ENCODE measurements at regions of chr5 and their contacts with region 1.

Region 1: GRCh38 chr5:36875790-36876388 is 680 bp upstream of the NIPBL start:
- DNase-seq: peak; percentile 75
- ATAC-seq: peak; percentile 69
- H3K4me3 Mint-ChIP-seq: peak overlapping the region; percentile 93
- H3K27ac Mint-ChIP-seq: peak overlapping the region; percentile 93
- H3K4me1 Mint-ChIP-seq: peaks cover 46% of the 10 kb centered on the region
- H3K27me3 Mint-ChIP-seq: no peaks in the 10 kb centered on the region
- CTCF ChIP-seq: no peak

Region 2: DNA sequence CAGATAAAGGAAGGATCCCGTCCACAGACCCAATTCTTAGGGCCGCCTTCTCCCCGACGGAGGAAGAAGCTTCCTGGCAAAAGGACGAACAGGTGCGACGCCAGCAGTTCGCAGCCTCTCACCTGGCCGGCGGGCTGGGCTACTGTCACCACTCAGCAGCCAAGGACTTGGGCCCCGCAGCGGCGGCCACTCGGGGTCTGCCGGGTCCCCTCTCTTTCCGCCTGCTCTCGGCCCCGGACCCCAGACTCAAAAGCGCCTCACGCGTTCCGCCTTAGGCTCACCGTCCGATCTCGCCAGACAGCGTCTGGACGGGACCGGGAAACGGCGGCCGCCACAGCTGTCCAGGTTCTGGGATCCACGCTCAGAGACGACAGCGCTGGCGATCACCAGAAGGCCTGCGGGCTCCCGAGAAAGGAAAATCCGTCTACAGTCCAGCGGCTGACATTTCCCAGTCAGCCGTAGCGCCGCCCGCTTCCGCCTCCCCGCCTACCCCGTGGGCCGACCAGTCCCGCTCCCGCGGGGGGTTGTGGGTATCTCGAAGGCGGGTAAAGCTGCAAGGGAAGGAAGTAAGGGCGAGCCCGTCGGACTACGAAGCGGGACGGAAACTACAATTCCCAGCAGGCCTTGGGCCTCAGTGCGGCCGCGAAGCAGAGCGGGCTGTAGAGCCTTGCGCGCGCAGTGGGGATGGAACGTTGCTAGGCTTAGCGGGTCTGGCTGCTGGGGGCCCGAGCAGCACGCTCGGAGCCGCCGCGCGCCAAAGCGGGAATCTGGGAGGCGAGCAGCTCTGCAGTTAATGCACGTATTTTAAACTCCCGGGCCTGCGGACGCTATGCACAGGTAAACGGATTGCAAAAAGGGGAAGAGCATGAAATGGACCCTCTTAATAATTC is 724.2 kb before region 1 on chr5 and contains the starts of genes LMBRD2 and SKP2:
- CTCF ChIA-PET with region 1: no interaction called
- POLR2A ChIA-PET with region 1: no interaction called
- intact Hi-C with region 1: loop called (anchors 2 kb)
- DNase-seq: peak; percentile 95
- ATAC-seq: peak; percentile 97
- H3K4me3 Mint-ChIP-seq: peak within 1 kb of the TSS; percentile 96
- H3K27ac Mint-ChIP-seq: peak within 1 kb of the TSS; percentile 85
- H3K4me1 Mint-ChIP-seq: peaks cover 40% of the 10 kb centered on the region
- H3K27me3 Mint-ChIP-seq: no peaks in the 10 kb centered on the region
- CTCF ChIP-seq: no peak
- total RNA-seq, gene LMBRD2: 6.4 and 8.9 TPM in 2 replicates
- total RNA-seq, gene SKP2: 18.5 TPM in 2 replicates

Region 3: GRCh38 chr5:36744773-36745589 is 130.9 kb before region 1 on chr5:
- CTCF ChIA-PET with region 1: interaction called, 7 read pairs
- POLR2A ChIA-PET with region 1: no interaction called
- intact Hi-C with region 1: loop called (anchors 1 kb)
- DNase-seq: peak; percentile 48
- ATAC-seq: peak; percentile 74
- H3K4me3 Mint-ChIP-seq: peak overlapping the region; percentile 89
- H3K27ac Mint-ChIP-seq: peak overlapping the region; percentile 22
- H3K4me1 Mint-ChIP-seq: peaks cover 21% of the 10 kb centered on the region
- H3K27me3 Mint-ChIP-seq: peaks cover 10% of the 10 kb centered on the region
- CTCF ChIP-seq: no peak

Region 4: DNA sequence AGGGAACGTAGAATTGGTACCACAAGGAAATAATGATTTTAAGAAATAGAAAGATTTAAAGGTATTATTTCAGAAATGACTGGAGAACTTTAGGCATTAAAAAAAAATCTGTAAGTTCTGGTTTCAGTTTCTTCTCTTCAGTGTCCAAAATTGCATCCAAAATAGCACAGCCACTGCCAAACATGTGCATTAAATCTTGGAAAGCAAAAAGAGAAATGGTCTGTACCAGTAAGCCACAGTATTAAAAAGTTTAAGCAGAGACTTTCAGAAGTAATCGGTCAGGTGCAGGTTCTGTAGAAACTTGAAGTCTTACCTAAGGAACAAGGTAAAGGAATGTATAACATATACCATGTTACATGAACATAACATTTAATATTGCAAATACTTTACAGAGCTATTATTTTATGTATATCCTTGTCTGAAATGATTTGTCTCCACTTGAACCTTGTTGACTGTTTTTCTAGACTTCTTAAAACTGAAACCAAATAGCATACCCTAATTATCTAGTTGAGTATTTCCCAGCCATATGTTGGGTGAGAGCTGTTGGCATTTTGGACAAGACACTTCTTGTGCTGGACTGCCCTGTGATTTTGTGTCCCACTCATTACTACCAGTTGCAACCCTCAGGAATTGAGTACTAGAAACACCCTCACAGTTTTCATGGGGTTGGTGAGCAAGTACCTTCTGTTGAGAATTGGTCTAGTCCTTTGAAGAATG is 32.8 kb after region 1 on chr5:
- CTCF ChIA-PET with region 1: no interaction called
- POLR2A ChIA-PET with region 1: interaction called, 3 read pairs
- intact Hi-C with region 1: loop called (anchors 5 kb)
- DNase-seq: no peak
- ATAC-seq: no peak
- H3K4me3 Mint-ChIP-seq: no peak overlapping the region
- H3K27ac Mint-ChIP-seq: no peak overlapping the region
- H3K4me1 Mint-ChIP-seq: peaks cover 52% of the 10 kb centered on the region
- H3K27me3 Mint-ChIP-seq: no peaks in the 10 kb centered on the region
- CTCF ChIP-seq: no peak

Region 5: GRCh38 chr5:36982146-36982545 is 106.3 kb after region 1 on chr5:
- CTCF ChIA-PET with region 1: no interaction called
- POLR2A ChIA-PET with region 1: no interaction called
- intact Hi-C with region 1: no loop called
- DNase-seq: no peak
- ATAC-seq: no peak
- H3K4me3 Mint-ChIP-seq: no peak overlapping the region
- H3K27ac Mint-ChIP-seq: no peak overlapping the region
- H3K4me1 Mint-ChIP-seq: peaks cover 12% of the 10 kb centered on the region
- H3K27me3 Mint-ChIP-seq: no peaks in the 10 kb centered on the region
- CTCF ChIP-seq: no peak

Region 6: GRCh38 chr5:37005946-37006540 is 130.2 kb after region 1 on chr5:
- CTCF ChIA-PET with region 1: no interaction called
- POLR2A ChIA-PET with region 1: interaction called, 3 read pairs
- intact Hi-C with region 1: loop called (anchors 2 kb)
- DNase-seq: no peak
- ATAC-seq: no peak
- H3K4me3 Mint-ChIP-seq: no peak overlapping the region
- H3K27ac Mint-ChIP-seq: no peak overlapping the region
- H3K4me1 Mint-ChIP-seq: no peaks in the 10 kb centered on the region
- H3K27me3 Mint-ChIP-seq: no peaks in the 10 kb centered on the region
- CTCF ChIP-seq: no peak

Region 7: DNA sequence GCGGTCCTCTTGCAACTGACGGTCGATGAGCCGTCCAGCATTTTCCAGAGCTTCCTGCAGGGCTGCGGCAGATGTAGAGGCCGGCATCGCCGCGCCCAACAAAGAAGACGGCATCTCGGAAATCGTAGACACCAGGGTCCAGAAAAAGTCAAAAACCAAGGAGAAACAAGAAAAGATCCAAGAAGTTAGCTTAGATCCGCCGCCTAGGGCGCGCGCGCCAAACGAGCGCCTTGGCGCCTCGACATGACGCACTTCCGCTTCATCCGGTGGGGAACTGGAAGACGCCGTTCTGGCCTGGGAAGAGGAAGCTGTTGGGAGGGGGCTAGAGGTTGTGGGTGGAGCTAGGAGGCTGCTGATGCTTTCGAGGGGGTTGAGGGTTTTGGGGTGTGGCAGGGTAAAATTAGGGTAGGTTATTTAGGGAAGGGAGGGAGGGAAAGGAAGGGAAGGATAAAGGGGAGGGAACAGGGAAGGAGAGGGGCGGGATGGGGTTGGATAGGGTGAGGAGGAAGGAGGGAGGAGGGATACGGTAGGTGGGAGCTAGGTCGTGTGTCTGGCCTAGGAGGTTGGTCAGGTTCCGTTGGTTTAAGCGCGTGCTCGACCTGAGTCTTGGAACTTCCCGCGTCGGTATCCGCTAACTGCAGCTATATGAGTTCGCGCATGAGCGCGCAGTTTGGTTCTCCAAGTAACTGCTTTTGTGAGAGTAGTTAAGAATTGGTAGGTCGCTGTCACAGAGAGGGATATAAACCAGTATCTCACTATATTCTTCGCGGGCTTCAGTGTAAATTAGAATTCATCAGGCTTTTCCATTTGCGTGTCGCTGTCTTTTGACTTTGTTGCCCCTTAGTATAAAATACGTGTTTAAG is 495.2 kb after region 1 on chr5 and contains the start of gene NUP155:
- CTCF ChIA-PET with region 1: no interaction called
- POLR2A ChIA-PET with region 1: interaction called, 7 read pairs
- intact Hi-C with region 1: loop called (anchors 5 kb)
- DNase-seq: peak; percentile 79
- ATAC-seq: peak; percentile 94
- H3K4me3 Mint-ChIP-seq: peak within 1 kb of the TSS; percentile 99
- H3K27ac Mint-ChIP-seq: peak within 1 kb of the TSS; percentile 97
- H3K4me1 Mint-ChIP-seq: peaks cover 32% of the 10 kb centered on the region
- H3K27me3 Mint-ChIP-seq: no peaks in the 10 kb centered on the region
- CTCF ChIP-seq: no peak
- total RNA-seq, gene NUP155: 37.2 and 38.7 TPM in 2 replicates

Measured in activated B cell treated with CpG ODN at 0.5 μM for 24 hours (primary cell).